Right ventricle myocardium inferior (tissue), 1 donor: ENCODE measurements at regions of chrX and their contacts with region 1.

Region 1: DNA sequence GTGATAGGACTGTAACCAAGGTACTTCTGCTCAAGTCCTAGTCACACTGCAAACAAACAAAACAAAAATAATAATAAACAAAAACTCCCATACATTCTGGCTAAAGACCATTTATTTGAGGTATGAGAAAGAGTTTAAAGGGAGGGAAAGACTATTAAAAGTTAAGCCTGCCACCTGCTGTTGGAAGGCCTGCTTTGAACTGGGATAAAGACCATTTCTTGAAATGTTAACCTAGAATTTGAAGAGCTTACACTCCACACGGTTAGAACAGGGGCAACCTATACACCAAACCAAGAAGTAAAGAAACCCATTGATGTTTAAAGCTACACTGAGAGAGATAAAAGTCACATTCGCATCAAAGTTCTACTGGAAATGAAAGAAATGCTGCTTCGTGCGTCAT is 548.7 kb upstream of the DIPK2B start:
- DNase-seq: no peak
- ATAC-seq: no peak

Region 2: DNA sequence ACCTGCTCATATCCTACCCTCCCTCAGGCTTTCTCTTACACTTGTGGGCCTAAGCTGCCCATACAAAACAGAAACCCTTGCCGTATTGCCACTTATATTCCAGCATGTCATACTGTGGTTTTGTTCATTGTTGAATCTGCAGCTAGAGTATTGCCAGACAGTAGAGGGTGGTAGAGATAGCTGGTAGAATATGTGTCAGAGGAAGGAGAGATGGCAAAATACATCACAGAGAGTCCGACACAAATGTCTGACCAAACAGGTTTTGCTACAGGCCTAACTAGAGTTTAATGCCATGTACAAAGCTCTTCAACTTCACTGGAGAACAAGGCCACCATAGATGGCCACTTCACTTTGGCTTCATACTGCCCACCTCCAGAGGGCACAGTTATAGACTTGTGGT is 1566.0 kb before region 1 on chrX:
- intact Hi-C with region 1: no loop called
- DNase-seq: no peak
- ATAC-seq: no peak

Region 3: GRCh38 chrX:45505214-45505613 is 244.2 kb before region 1 on chrX:
- intact Hi-C with region 1: loop called (anchors 5 kb)
- DNase-seq: no peak
- ATAC-seq: no peak

Region 4: DNA sequence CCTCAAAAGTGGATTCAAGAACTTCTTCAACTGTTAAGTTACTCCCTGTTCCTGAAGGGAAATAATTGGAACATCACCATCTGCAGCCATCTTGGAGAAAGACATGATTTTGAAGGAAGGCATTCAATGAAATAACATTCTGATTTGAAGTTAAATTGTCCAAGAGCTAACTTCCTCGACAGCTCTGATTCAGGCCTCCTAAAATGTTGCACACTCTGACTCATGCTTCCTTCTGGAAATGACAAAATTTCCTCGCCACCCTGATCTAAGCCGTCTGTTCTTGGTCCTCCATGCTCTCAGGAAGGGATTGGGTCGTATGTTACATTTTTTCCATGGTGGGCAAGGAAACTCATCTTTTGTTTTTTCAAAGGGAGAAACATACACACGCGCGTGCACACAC is 51.8 kb before region 1 on chrX:
- intact Hi-C with region 1: no loop called
- DNase-seq: no peak
- ATAC-seq: no peak